ENCODE measurements at regions of chr11 and their contacts with region 1.

Region 1: GRCh38 chr11:115324581-115325432 is 179.4 kb downstream of the CADM1 start:
- DNase-seq: no peak
- ATAC-seq: peak; percentile 52
- H3K4me3 Mint-ChIP-seq: no peak overlapping the region
- H3K27ac Mint-ChIP-seq: no peak overlapping the region
- H3K4me1 Mint-ChIP-seq: no peaks in the 10 kb centered on the region
- H3K27me3 Mint-ChIP-seq: peaks cover 3% of the 10 kb centered on the region
- CTCF ChIP-seq: no peak

Region 2: GRCh38 chr11:115919341-115920091 is 594.7 kb after region 1 on chr11:
- CTCF ChIA-PET with region 1: no interaction called
- POLR2A ChIA-PET with region 1: no interaction called
- intact Hi-C with region 1: no loop called
- DNase-seq: no peak
- ATAC-seq: peak; percentile 27
- H3K4me3 Mint-ChIP-seq: no peak overlapping the region
- H3K27ac Mint-ChIP-seq: peak overlapping the region; percentile 55
- H3K4me1 Mint-ChIP-seq: peaks cover 16% of the 10 kb centered on the region
- H3K27me3 Mint-ChIP-seq: no peaks in the 10 kb centered on the region
- CTCF ChIP-seq: no peak

Region 3: GRCh38 chr11:116276051-116277044 is 951.5 kb after region 1 on chr11:
- CTCF ChIA-PET with region 1: no interaction called
- POLR2A ChIA-PET with region 1: no interaction called
- intact Hi-C with region 1: loop called (anchors 1 kb)
- DNase-seq: peak; percentile 34
- ATAC-seq: no peak
- H3K4me3 Mint-ChIP-seq: no peak overlapping the region
- H3K27ac Mint-ChIP-seq: no peak overlapping the region
- H3K4me1 Mint-ChIP-seq: no peaks in the 10 kb centered on the region
- H3K27me3 Mint-ChIP-seq: peaks cover 9% of the 10 kb centered on the region
- CTCF ChIP-seq: no peak

Measured in activated B cell treated with CpG ODN at 0.5 μM for 24 hours (primary cell).